ENCODE measurements at regions of chr19 and their contacts with region 1.

Region 1: GRCh38 chr19:3471954-3472655 is 8.2 kb downstream of the SMIM24 start:
- DNase-seq: no peak
- H3K4me3 ChIP-seq: no peak overlapping the region
- H3K27ac ChIP-seq: peak overlapping the region in 1 of 4 donors; percentile 92
- H3K4me1 ChIP-seq: peaks cover 0 to 40% (median 30%) of the 10 kb centered on the region in 4 donors
- H3K27me3 ChIP-seq: peaks cover 0 to 6% (median 6%) of the 10 kb centered on the region in 3 donors
- CTCF ChIP-seq: peak; percentile 84 to 96 (median 92)
- EP300 ChIP-seq: no peak
- POLR2A ChIP-seq: no peak

Region 2: GRCh38 chr19:3304871-3305423 is 167.2 kb before region 1 on chr19:
- intact Hi-C with region 1: loop called (anchors 2 kb)
- DNase-seq: peak; percentile 82
- H3K4me3 ChIP-seq: no peak overlapping the region
- H3K27ac ChIP-seq: no peak overlapping the region
- H3K4me1 ChIP-seq: peaks cover 0 to 12% (median 7%) of the 10 kb centered on the region in 4 donors
- H3K27me3 ChIP-seq: peaks cover 4 to 75% (median 19%) of the 10 kb centered on the region in 3 donors
- CTCF ChIP-seq: peak; percentile 78 to 90 (median 86)
- EP300 ChIP-seq: peak in 2 of 4 donors; percentile 51 to 78
- POLR2A ChIP-seq: no peak

Region 3: DNA sequence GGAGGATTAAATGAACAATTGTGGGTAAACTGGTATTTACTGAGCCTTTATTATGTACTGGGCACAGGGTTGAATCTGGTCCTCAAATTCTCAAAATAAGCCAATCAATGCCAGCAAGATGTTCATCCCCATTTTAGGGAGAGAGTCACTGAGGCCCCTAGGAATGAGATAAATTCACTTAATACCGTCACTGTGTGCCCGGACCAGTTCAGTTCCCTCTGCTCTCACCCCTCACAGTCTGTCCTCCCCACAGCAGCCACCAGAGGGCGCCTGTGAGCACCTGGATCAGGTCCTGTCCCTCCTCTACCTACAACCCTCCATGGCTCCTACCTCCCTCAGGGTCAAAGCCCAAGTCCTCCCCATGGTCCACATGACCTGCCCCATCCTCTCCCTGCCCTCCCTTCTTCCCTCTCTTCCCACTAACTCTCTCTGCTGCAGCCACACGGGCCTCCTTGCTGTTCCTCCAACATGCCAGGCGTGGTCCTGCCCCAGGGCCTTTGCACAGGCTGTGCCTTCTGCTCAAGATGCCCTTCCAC is 147.7 kb before region 1 on chr19:
- intact Hi-C with region 1: loop called (anchors 1 kb)
- DNase-seq: peak; percentile 80
- H3K4me3 ChIP-seq: no peak overlapping the region
- H3K27ac ChIP-seq: no peak overlapping the region
- H3K4me1 ChIP-seq: peaks cover 0 to 9% (median 4%) of the 10 kb centered on the region in 4 donors
- H3K27me3 ChIP-seq: peaks cover 0 to 22% (median 19%) of the 10 kb centered on the region in 3 donors
- CTCF ChIP-seq: peak; percentile 54 to 66 (median 58)
- EP300 ChIP-seq: no peak
- POLR2A ChIP-seq: no peak

Region 4: DNA sequence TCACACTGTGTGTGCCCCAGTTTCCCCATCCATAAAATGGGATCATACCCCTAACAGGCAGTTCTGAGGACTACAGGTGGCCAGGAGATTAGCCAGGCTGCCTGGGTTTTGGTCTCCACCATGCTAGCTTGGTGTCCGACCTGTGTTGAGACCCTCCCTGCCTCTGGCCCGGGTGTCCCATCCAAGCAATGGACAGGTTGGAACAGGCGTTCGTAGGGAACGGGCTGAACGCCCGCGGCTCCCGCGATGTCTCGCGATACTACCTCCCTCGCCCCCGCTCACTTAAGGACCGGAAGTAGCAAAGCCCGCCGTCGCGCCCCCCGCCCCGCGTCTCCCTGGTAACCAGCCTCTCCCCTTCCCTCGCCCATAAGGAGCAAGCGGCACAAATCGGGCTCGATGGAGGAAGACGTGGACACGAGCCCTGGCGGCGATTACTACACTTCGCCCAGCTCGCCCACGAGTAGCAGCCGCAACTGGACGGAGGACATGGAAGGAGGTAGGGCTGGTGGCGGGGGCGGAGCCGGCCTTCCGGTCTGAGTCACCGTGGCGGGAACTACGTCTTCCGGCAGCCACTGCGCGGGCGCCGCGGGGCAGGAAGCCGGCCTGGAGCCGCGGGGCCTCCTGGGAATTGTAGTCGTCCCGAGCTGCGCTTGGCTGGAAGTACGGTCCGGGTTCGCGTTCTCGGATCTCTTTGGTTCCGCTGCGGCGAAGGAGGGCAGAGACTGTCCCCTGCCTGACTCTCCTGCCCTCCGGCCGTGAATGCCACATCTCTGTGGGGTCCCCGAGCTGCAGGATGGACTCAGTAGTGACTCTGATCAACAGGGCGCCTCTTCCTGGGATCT is 37.2 kb before region 1 on chr19:
- intact Hi-C with region 1: loop called (anchors 5 kb)
- DNase-seq: peak; percentile 98
- H3K4me3 ChIP-seq: peak overlapping the region; percentile 20 to 48 (median 38)
- H3K27ac ChIP-seq: peak overlapping the region; percentile 83 to 97 (median 92)
- H3K4me1 ChIP-seq: peaks cover 0 to 61% (median 53%) of the 10 kb centered on the region in 4 donors
- H3K27me3 ChIP-seq: no peaks in the 10 kb centered on the region
- CTCF ChIP-seq: no peak
- EP300 ChIP-seq: peak in 1 of 4 donors; percentile 35
- POLR2A ChIP-seq: no peak

Region 5: GRCh38 chr19:3606690-3607289 is 134.7 kb after region 1 on chr19 and contains the start of gene TBXA2R:
- intact Hi-C with region 1: no loop called
- DNase-seq: peak; percentile 90
- H3K4me3 ChIP-seq: peak within 1 kb of the TSS; percentile 40 to 62 (median 56)
- H3K27ac ChIP-seq: peak within 1 kb of the TSS; percentile 69 to 86 (median 78)
- H3K4me1 ChIP-seq: peaks cover 0 to 45% (median 35%) of the 10 kb centered on the region in 4 donors
- H3K27me3 ChIP-seq: no peaks in the 10 kb centered on the region
- CTCF ChIP-seq: no peak
- EP300 ChIP-seq: no peak
- POLR2A ChIP-seq: peak in 1 of 2 donors; percentile 15
- total RNA-seq, gene TBXA2R: 0.36 to 3.6 (median 0.68) TPM